ENCODE measurements at regions of chr17 and their contacts with region 1.

Region 1: GRCh38 chr17:77178563-77178962 is 37.8 kb downstream of the SEC14L1 start:
- DNase-seq: no peak
- H3K4me3 ChIP-seq: no peak overlapping the region
- H3K27ac ChIP-seq: no peak overlapping the region
- H3K4me1 ChIP-seq: peaks cover 2% of the 10 kb centered on the region
- H3K27me3 ChIP-seq: no peaks in the 10 kb centered on the region
- CTCF ChIP-seq: no peak
- EP300 ChIP-seq: no peak
- POLR2A ChIP-seq: no peak

Region 2: DNA sequence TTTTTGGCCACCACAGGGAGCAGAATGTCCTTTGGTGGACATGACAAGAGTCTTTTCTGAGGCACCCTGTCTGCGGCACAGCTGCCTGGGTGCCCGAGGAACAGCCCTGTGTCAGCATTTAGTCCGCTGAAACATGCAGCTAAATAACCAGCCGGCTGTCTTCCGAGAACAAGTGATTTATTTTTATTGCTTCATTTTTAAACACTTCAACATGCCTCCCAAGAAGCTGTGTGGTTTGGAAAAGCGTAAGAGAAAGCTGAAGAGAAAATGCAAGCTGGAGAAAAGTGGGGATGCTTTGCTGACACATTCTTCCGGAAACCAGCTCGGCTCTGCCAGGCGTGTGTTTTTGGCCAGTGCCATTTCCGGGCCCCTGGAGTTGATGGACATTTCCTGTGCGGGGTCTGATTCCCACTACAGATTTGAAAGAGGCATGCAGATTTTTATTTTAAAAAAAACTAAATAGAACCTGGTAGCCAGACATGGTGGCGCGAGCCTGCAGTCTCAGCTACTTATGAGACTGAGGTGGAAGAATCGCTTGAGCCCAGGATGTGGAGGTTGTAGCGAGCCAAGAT is 56.9 kb after region 1 on chr17:
- intact Hi-C with region 1: loop called in 1 of 4 experiments (anchors 10 kb)
- DNase-seq: no peak
- H3K4me3 ChIP-seq: peak overlapping the region; percentile 13
- H3K27ac ChIP-seq: peak overlapping the region in 1 of 2 donors; percentile 9
- H3K4me1 ChIP-seq: no peaks in the 10 kb centered on the region
- H3K27me3 ChIP-seq: no peaks in the 10 kb centered on the region
- CTCF ChIP-seq: no peak
- EP300 ChIP-seq: no peak
- POLR2A ChIP-seq: no peak

Measured in ovary (tissue), 10 donors.